ENCODE measurements at regions of chr19 and their contacts with region 1.

Region 1: GRCh38 chr19:29761575-29762232 is 46.6 kb upstream of the C19orf12 start:
- DNase-seq: no peak
- H3K4me3 ChIP-seq: no peak overlapping the region
- H3K27ac ChIP-seq: no peak overlapping the region
- H3K4me1 ChIP-seq: peaks cover 2% of the 10 kb centered on the region
- H3K27me3 ChIP-seq: no peaks in the 10 kb centered on the region
- CTCF ChIP-seq: no peak
- POLR2A ChIP-seq: no peak

Region 2: GRCh38 chr19:29704562-29705558 is 56.8 kb before region 1 on chr19:
- CTCF ChIA-PET with region 1: no interaction called
- POLR2A ChIA-PET with region 1: no interaction called
- dilution Hi-C with region 1: no loop called
- intact Hi-C with region 1: no loop called
- DNase-seq: no peak
- H3K4me3 ChIP-seq: no peak overlapping the region
- H3K27ac ChIP-seq: no peak overlapping the region
- H3K4me1 ChIP-seq: no peaks in the 10 kb centered on the region
- H3K27me3 ChIP-seq: no peaks in the 10 kb centered on the region
- CTCF ChIP-seq: no peak
- POLR2A ChIP-seq: no peak

Region 3: DNA sequence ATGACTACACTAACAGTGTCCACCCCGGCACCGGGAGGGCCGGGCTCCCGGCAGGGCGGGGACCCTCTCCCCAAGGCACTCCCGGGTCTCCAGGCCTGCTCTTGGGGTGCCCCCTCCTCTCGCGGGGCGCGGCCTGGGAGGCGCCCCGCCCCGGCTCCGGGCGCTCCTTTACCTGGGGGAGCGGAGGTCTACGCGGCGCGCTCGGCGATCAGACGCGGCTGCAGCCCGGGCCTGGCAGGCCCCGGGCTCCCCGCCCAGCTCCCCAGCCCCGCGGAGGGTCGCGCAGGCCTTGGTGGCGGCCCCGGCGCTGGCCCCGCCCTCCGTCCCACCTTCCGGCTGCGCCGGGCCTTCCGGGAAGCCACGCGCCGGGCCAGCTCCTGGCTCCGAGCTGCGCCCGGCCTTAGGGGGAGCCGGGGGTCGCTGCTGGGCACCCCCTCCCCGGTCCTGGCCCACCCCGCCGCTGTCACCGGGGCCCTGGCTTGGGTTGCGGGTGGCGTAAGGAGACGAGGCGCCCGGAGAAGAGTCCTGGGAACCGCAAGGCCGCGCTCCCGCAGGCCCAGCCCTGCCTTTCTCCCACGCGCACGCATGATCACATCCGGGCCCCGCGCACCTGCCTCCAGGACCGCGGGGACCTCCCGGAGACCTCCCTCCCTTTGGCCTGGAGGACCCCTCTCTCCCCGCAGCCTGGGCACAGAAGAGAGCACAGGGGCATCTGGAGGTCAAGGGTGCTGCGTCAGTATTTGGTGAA is 46.6 kb before region 1 on chr19 and contains the start of gene C19orf12:
- CTCF ChIA-PET with region 1: interaction called, 13 read pairs
- POLR2A ChIA-PET with region 1: no interaction called
- dilution Hi-C with region 1: no loop called
- intact Hi-C with region 1: no loop called
- DNase-seq: peak; percentile 25
- H3K4me3 ChIP-seq: peak within 1 kb of the TSS; percentile 54 to 73 (median 68)
- H3K27ac ChIP-seq: peak within 1 kb of the TSS; percentile 72
- H3K4me1 ChIP-seq: peaks cover 5% of the 10 kb centered on the region
- H3K27me3 ChIP-seq: no peaks in the 10 kb centered on the region
- CTCF ChIP-seq: no peak
- POLR2A ChIP-seq: peak; percentile 86
- total RNA-seq, gene C19orf12: 22.9 and 23.0 TPM in 2 replicates

Region 4: DNA sequence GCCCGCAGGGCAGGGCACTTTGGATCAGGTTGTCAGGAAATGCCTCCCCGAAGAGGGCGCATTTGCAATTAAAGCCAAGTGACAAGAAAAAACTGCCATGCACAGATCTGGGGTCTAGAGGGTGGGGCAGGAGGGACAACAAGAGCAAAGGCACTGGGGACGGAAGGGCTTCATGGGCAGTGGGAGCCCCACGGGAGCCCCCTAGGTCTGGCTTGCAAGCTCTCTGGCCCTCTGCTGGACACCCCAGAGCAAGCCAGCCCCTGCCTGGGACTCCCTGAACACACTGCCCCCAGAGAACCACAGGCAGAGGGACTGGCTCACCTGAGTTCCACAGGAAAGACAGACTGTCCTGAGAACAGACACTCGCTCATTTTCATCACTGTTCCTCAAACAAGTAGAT is 16.5 kb before region 1 on chr19:
- CTCF ChIA-PET with region 1: interaction called, 13 read pairs
- POLR2A ChIA-PET with region 1: no interaction called
- dilution Hi-C with region 1: no loop called
- intact Hi-C with region 1: no loop called
- DNase-seq: no peak
- H3K4me3 ChIP-seq: no peak overlapping the region
- H3K27ac ChIP-seq: no peak overlapping the region
- H3K4me1 ChIP-seq: no peaks in the 10 kb centered on the region
- H3K27me3 ChIP-seq: no peaks in the 10 kb centered on the region
- CTCF ChIP-seq: peak in 1 of 2 donors; percentile 12
- POLR2A ChIP-seq: no peak

Region 5: GRCh38 chr19:29779921-29780320 is 18.2 kb after region 1 on chr19:
- CTCF ChIA-PET with region 1: interaction called, 12 read pairs
- POLR2A ChIA-PET with region 1: no interaction called
- dilution Hi-C with region 1: no loop called
- intact Hi-C with region 1: no loop called
- DNase-seq: no peak
- H3K4me3 ChIP-seq: no peak overlapping the region
- H3K27ac ChIP-seq: no peak overlapping the region
- H3K4me1 ChIP-seq: no peaks in the 10 kb centered on the region
- H3K27me3 ChIP-seq: no peaks in the 10 kb centered on the region
- CTCF ChIP-seq: no peak
- POLR2A ChIP-seq: no peak

Region 6: DNA sequence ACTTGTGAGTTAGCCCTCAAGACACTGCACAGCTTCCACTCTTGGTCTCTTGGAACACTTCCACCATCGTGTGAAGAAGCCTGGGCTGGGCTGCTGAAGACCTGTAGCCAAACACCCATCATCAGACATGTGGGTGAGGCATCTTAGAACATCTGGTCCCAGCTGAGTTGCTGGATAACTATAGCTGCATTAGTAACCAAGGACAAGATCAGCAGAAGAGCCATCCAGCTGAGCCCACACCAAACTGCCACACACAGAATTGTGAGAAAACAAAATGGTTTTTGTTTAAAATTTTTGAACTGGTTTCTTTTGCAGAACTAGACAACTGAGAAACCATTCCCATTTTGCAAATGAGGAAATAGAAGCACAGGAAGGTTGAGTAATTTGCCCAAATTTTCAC is 106.3 kb after region 1 on chr19:
- CTCF ChIA-PET with region 1: interaction called, 116 read pairs
- POLR2A ChIA-PET with region 1: no interaction called
- dilution Hi-C with region 1: no loop called
- intact Hi-C with region 1: loop called (anchors 1 kb)
- DNase-seq: no peak
- H3K4me3 ChIP-seq: no peak overlapping the region
- H3K27ac ChIP-seq: no peak overlapping the region
- H3K4me1 ChIP-seq: peaks cover 2% of the 10 kb centered on the region
- H3K27me3 ChIP-seq: no peaks in the 10 kb centered on the region
- CTCF ChIP-seq: no peak
- POLR2A ChIP-seq: no peak

Region 7: GRCh38 chr19:29878973-29879654 is 117.4 kb after region 1 on chr19:
- CTCF ChIA-PET with region 1: interaction called, 116 read pairs
- POLR2A ChIA-PET with region 1: no interaction called
- dilution Hi-C with region 1: no loop called
- intact Hi-C with region 1: no loop called
- DNase-seq: no peak
- H3K4me3 ChIP-seq: no peak overlapping the region
- H3K27ac ChIP-seq: no peak overlapping the region
- H3K4me1 ChIP-seq: no peaks in the 10 kb centered on the region
- H3K27me3 ChIP-seq: no peaks in the 10 kb centered on the region
- CTCF ChIP-seq: no peak
- POLR2A ChIP-seq: no peak

Region 8: DNA sequence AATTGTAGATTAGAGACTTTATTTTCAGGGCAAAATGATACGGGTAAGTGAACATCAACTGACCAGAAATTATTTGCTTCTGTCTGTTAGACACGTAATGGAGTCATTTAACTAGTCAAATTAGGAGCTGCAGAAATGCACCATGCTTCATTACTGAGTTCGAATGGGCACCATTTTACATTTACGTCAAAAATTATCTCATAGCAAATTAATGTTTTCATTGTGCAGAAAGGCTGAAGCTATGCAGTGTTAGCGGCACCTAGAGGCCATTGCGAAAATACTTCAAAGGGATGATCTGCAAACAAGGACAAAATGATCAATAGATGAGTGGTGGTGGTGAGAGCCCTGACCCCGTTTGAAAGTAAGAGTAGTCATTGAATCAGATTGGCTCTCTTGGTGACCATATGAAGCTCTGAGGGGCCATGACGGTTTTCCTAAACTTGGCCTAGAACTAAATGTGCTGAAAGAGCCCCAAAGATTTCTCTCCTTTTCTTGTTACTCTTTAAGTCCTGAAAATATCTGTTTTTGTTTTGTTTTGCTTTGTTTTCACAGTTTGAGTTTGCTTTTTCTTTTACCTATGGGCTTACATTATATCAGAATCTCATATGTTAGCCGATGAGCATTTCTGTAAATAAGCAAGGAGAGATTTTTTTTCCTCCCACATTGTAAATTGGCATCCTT is 888.4 kb after region 1 on chr19:
- CTCF ChIA-PET with region 1: interaction called, 13 read pairs
- POLR2A ChIA-PET with region 1: no interaction called
- dilution Hi-C with region 1: no loop called
- intact Hi-C with region 1: loop called (anchors 1 kb)
- DNase-seq: peak; percentile 48
- H3K4me3 ChIP-seq: no peak overlapping the region
- H3K27ac ChIP-seq: no peak overlapping the region
- H3K4me1 ChIP-seq: no peaks in the 10 kb centered on the region
- H3K27me3 ChIP-seq: no peaks in the 10 kb centered on the region
- CTCF ChIP-seq: peak; percentile 66 to 70
- POLR2A ChIP-seq: no peak